Gastrocnemius medialis (tissue), 4 donors: ENCODE measurements at regions of chr10 and their contacts with region 1.

Region 1: GRCh38 chr10:63115732-63116383 is 17.3 kb upstream of the NRBF2 start:
- DNase-seq: peak; percentile 93 to 96
- ATAC-seq: peak; percentile 93 to 95
- H3K4me3 ChIP-seq: peak overlapping the region in 1 of 4 donors; percentile 6
- H3K27ac ChIP-seq: peak overlapping the region; percentile 87 to 99 (median 93)
- H3K4me1 ChIP-seq: peaks cover 30 to 32% of the 10 kb centered on the region in 2 donors
- H3K27me3 ChIP-seq: no peaks in the 10 kb centered on the region
- CTCF ChIP-seq: peak in 1 of 5 experiments; percentile 7
- POLR2A ChIP-seq: peak; percentile 51 to 56

Region 2: DNA sequence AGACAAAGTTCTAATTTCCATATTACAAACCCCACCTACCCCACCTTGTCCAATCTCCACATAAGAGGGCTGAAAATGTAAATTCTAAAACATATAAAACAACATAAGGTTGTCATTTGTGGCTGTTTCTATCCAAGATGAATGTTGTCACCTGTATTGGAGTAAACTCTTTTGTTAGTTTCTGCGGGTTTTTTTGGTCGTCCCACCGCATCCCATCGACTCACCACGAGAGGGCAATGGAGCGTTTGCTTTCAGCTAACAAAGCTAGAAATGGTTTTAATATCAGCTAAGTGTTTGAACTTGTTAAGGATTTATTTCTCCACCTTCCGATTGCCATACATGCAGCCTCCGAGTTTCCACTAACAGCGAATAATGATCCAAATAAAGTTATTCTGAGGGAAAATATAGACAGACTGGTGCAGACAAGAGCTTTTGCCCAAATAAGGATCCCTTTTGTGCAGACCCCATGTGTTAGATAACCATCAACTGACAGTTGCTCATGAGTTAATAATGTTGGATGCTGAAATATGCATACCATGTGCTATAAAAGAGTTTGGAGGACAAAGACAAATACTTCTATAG is 1077.2 kb before region 1 on chr10:
- in situ Hi-C with region 1: loop called in 1 of 4 experiments (anchors 25 kb)
- intact Hi-C with region 1: loop called (anchors 10 kb)
- DNase-seq: peak; percentile 48 to 65
- ATAC-seq: peak; percentile 73 to 85
- H3K4me3 ChIP-seq: peak overlapping the region in 3 of 4 donors; percentile 4 to 43 (median 27)
- H3K27ac ChIP-seq: peak overlapping the region in 2 of 4 donors; percentile 1 to 50
- H3K4me1 ChIP-seq: peaks cover 21 to 39% of the 10 kb centered on the region in 2 donors
- H3K27me3 ChIP-seq: no peaks in the 10 kb centered on the region
- CTCF ChIP-seq: peak; percentile 80 to 92 (median 89)
- POLR2A ChIP-seq: no peak

Region 3: DNA sequence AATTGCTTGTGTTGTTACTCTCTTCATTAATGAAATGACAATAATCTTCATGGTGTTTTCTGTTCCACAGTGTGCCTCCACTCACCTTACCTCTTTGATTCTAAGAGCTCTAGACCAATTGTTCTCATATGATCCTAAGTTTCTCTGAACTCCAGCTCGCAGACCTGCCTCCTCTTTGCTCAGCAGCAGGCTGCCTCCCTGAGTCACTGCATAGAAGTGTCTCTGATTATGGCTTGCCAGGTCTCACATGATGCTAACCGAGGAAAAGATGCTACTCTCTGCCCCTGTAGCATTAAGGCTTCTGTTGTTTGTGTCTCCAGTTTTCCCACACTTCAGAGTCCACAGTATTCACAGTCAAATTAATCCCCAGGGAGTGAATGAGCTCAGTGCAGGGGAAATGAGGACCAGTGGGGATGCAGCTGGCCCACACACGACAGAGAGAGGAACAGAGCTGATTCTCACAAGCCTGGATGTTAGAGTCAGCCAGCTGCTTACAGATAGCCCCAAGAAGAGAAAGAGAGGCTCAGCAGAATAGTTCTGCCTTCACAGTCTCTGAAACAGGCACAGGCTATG is 153.8 kb before region 1 on chr10:
- in situ Hi-C with region 1: no loop called
- intact Hi-C with region 1: no loop called
- DNase-seq: no peak
- ATAC-seq: no peak
- H3K4me3 ChIP-seq: no peak overlapping the region
- H3K27ac ChIP-seq: no peak overlapping the region
- H3K4me1 ChIP-seq: no peaks in the 10 kb centered on the region
- H3K27me3 ChIP-seq: no peaks in the 10 kb centered on the region
- CTCF ChIP-seq: no peak
- POLR2A ChIP-seq: no peak

Region 4: GRCh38 chr10:63133056-63133820 is 17.4 kb after region 1 on chr10 and contains the start of gene NRBF2:
- in situ Hi-C with region 1: no loop called
- intact Hi-C with region 1: loop called (anchors 1 kb)
- DNase-seq: peak; percentile 94 to 98
- ATAC-seq: peak; percentile 90 to 95
- H3K4me3 ChIP-seq: peak within 1 kb of the TSS; percentile 64 to 94 (median 84)
- H3K27ac ChIP-seq: peak within 1 kb of the TSS; percentile 90 to 96 (median 96)
- H3K4me1 ChIP-seq: peaks cover 33 to 36% of the 10 kb centered on the region in 2 donors
- H3K27me3 ChIP-seq: no peaks in the 10 kb centered on the region
- CTCF ChIP-seq: peak in 2 of 5 experiments; percentile 19 to 31
- POLR2A ChIP-seq: peak; percentile 97 to 99
- total RNA-seq, gene NRBF2: 10.2 to 29.2 (median 13.3) TPM